Activated B cell treated with CpG ODN at 0.5 μM for 24 hours (primary cell): ENCODE measurements at regions of chr6 and their contacts with region 1.

Region 1: GRCh38 chr6:34414999-34415858 is 10.6 kb downstream of the RPS10 start:
- DNase-seq: no peak
- ATAC-seq: peak; percentile 83
- H3K4me3 Mint-ChIP-seq: no peak overlapping the region
- H3K27ac Mint-ChIP-seq: no peak overlapping the region
- H3K4me1 Mint-ChIP-seq: peaks cover 6% of the 10 kb centered on the region
- H3K27me3 Mint-ChIP-seq: no peaks in the 10 kb centered on the region
- CTCF ChIP-seq: no peak

Region 2: GRCh38 chr6:33732826-33733708 is 682.2 kb before region 1 on chr6:
- CTCF ChIA-PET with region 1: no interaction called
- POLR2A ChIA-PET with region 1: no interaction called
- intact Hi-C with region 1: no loop called
- DNase-seq: no peak
- ATAC-seq: no peak
- H3K4me3 Mint-ChIP-seq: no peak overlapping the region
- H3K27ac Mint-ChIP-seq: no peak overlapping the region
- H3K4me1 Mint-ChIP-seq: no peaks in the 10 kb centered on the region
- H3K27me3 Mint-ChIP-seq: peaks cover 3% of the 10 kb centered on the region
- CTCF ChIP-seq: no peak

Region 3: DNA sequence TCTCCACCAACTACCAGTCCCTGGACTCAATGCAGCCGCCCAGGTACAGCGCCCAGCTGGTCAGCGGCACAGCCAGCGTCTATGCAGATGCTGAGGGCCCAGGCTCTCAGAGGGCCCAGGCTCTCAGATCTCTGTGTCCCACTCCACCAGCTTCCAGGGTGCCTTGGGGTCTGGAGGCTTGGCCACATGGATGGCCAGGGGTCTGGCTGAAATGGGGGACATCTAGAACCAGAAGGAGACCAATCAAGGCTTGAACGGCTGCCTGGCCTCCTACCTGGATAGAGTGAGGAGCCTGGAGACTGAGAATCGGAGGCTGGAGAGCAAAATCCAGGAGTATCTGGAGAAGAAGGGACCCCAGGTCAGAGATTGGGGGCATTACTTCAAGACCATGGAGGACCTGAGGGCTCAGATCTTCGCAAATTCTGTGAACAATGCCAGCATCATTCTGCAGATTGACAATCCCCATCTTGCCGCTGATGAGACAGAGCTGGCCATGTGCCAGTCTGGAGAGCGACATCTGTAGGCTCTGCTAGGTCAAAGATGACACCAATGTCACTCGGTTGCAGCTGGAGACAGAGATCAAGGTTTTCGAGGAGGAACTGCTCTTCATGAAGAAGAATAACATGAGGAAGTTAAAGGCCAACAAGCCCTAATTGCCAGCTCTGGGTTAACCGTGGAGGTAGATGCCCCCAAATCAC is 225.3 kb before region 1 on chr6:
- CTCF ChIA-PET with region 1: interaction called, 77 read pairs
- POLR2A ChIA-PET with region 1: interaction called, 7 read pairs
- intact Hi-C with region 1: no loop called
- DNase-seq: peak; percentile 37
- ATAC-seq: peak; percentile 94
- H3K4me3 Mint-ChIP-seq: peak overlapping the region; percentile 19
- H3K27ac Mint-ChIP-seq: peak overlapping the region; percentile 30
- H3K4me1 Mint-ChIP-seq: peaks cover 11% of the 10 kb centered on the region
- H3K27me3 Mint-ChIP-seq: no peaks in the 10 kb centered on the region
- CTCF ChIP-seq: no peak